ENCODE measurements at regions of chr5 and their contacts with region 1.

Region 1: DNA sequence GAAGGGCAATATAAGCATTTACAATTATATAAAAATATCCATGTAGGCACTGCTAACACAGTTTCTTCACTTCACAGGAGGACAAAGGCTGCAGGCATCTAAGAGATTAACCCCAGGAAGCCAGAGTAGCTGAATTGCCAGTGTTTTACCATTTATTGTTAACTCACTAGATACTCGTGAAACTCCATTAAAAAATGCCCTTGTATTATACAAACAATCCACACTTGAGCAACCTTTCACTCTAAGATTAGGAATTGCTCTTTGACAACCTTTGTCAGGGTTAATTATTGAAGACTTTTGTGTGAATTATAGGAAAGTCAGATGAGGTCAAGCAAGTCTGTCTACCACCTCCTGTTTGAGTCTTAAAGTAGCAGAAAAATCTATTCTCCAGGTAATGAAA is 317.8 kb downstream of the ADGRV1 start:
- DNase-seq: no peak
- ATAC-seq: no peak
- H3K4me3 Mint-ChIP-seq: no peak overlapping the region
- H3K27ac Mint-ChIP-seq: no peak overlapping the region
- H3K4me1 Mint-ChIP-seq: peaks cover 27% of the 10 kb centered on the region
- H3K27me3 Mint-ChIP-seq: peaks cover 17% of the 10 kb centered on the region
- CTCF ChIP-seq: no peak

Region 2: GRCh38 chr5:90866333-90866732 is 10.0 kb before region 1 on chr5:
- CTCF ChIA-PET with region 1: interaction called, 13 read pairs
- POLR2A ChIA-PET with region 1: no interaction called
- intact Hi-C with region 1: no loop called
- DNase-seq: no peak
- ATAC-seq: peak; percentile 49
- H3K4me3 Mint-ChIP-seq: no peak overlapping the region
- H3K27ac Mint-ChIP-seq: no peak overlapping the region
- H3K4me1 Mint-ChIP-seq: peaks cover 13% of the 10 kb centered on the region
- H3K27me3 Mint-ChIP-seq: peaks cover 6% of the 10 kb centered on the region
- CTCF ChIP-seq: peak; percentile 52

Region 3: DNA sequence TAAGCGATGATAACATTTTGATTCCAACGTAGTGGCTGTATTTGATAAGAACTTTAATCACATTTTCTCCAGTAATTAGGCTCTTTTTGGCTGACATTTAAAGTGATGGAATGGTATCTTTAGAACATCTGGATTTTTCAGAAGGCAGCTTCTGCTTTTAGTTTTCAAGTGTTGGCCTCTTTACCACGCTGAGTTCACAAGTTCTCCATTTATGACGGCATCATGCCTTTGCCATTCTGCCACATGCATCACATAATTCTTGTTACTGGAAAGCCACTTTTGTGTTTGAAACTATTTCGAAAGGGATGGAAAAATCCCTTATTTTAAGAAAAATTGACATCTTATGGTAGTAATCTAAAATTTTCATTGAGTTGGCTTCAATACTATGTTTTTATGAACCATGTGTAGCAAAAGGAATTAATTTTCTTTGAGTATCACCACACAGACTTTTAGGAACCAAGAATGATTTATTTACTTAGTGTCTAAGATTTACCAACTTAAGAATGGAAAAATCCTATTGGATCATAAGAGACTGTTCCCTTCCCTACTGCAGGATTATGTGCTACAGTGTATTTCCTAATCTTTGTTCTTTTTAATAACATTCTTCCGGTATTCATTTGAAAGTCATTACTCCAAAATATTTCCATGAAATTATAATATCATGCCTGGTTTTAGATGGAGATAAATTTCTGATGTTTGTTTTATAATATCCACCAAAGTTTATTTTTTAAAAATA is 26.5 kb after region 1 on chr5:
- CTCF ChIA-PET with region 1: no interaction called
- POLR2A ChIA-PET with region 1: no interaction called
- intact Hi-C with region 1: no loop called
- DNase-seq: no peak
- ATAC-seq: no peak
- H3K4me3 Mint-ChIP-seq: no peak overlapping the region
- H3K27ac Mint-ChIP-seq: no peak overlapping the region
- H3K4me1 Mint-ChIP-seq: no peaks in the 10 kb centered on the region
- H3K27me3 Mint-ChIP-seq: peaks cover 3% of the 10 kb centered on the region
- CTCF ChIP-seq: no peak

Region 4: GRCh38 chr5:91712718-91713117 is 836.4 kb after region 1 on chr5:
- CTCF ChIA-PET with region 1: no interaction called
- POLR2A ChIA-PET with region 1: no interaction called
- intact Hi-C with region 1: no loop called
- DNase-seq: no peak
- ATAC-seq: no peak
- H3K4me3 Mint-ChIP-seq: no peak overlapping the region
- H3K27ac Mint-ChIP-seq: no peak overlapping the region
- H3K4me1 Mint-ChIP-seq: no peaks in the 10 kb centered on the region
- H3K27me3 Mint-ChIP-seq: no peaks in the 10 kb centered on the region
- CTCF ChIP-seq: no peak